ENCODE measurements at regions of chr15 and their contacts with region 1.

Region 1: DNA sequence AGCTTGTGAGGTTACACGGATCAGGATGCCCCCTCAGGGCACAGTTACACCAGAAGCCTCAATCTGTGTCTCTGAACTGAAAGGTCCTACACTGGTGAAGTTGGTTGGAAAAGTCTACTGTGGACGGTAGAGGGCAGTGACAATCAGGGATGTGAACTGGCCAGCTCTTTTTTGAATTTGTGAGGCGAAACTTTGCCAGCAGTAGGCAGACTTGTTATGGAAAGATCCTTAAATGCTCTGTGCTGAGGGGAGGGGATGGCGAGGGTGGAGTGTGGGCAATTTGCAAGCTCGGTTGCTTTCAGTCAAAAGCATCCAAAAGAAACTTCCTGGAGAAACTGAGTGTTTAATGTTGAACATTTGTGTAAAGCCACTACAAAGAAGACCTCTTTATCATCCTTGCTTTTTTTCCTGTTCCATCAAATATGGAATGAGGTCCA is 127.4 kb upstream of the ABHD17C start:
- DNase-seq: peak in 1 of 3 donors; percentile 65
- ATAC-seq: peak; percentile 83 to 84
- H3K4me3 ChIP-seq: no peak overlapping the region
- H3K27ac ChIP-seq: no peak overlapping the region
- H3K4me1 ChIP-seq: no peaks in the 10 kb centered on the region
- H3K27me3 ChIP-seq: no peaks in the 10 kb centered on the region

Region 2: GRCh38 chr15:80455668-80456442 is 111.9 kb before region 1 on chr15:
- intact Hi-C with region 1: loop called in 2 of 4 experiments (anchors 10 kb)
- DNase-seq: peak in 2 of 3 donors; percentile 40 to 69
- ATAC-seq: peak; percentile 51 to 70
- H3K4me3 ChIP-seq: no peak overlapping the region
- H3K27ac ChIP-seq: no peak overlapping the region
- H3K4me1 ChIP-seq: no peaks in the 10 kb centered on the region
- H3K27me3 ChIP-seq: no peaks in the 10 kb centered on the region

Region 3: GRCh38 chr15:80970018-80970658 is 402.4 kb after region 1 on chr15:
- intact Hi-C with region 1: loop called in 3 of 4 experiments (anchors 5 to 10 kb)
- DNase-seq: peak; percentile 35 to 68 (median 63)
- ATAC-seq: peak; percentile 61 to 70
- H3K4me3 ChIP-seq: no peak overlapping the region
- H3K27ac ChIP-seq: no peak overlapping the region
- H3K4me1 ChIP-seq: no peaks in the 10 kb centered on the region
- H3K27me3 ChIP-seq: no peaks in the 10 kb centered on the region

Measured in right cardiac atrium (tissue), 5 donors.